HCT116 (cell line): ENCODE measurements at regions of chr12 and their contacts with region 1.

Region 1: DNA sequence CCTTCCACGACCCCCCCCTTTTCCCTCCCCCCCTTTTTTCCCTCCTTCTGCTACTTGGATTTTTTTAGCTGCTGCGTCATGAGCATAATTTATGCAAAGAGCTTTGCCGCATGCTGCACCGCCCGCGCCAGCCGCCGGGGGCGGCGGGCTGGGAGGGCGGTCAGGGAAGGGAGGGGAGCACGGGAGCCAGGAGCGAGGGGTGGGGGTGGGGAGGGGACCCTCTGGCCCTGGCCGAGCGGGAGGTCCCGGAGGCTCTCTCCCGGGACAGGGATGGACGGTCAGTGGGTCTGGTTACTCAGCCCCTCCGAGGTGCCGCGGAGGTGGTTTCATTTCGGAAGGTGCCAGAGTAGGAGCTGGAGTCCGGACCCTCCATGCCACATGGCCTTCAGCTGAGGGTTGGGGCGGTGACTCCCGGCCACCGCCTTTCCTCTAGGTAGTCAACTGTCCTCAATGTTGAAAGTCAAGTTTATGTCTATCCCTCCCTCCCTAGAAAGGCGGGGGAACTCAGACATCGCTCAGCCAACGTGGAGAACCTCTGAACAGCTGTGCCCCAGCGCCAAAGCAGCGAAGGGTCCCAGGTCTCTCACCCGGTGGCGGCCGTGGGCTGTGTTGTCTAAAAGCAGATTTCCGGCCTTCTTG is at the start of gene POU6F1:
- DNase-seq: peak; percentile 51
- ATAC-seq: peak; percentile 88
- H3K4me3 ChIP-seq: peak within 1 kb of the TSS; percentile 62 to 64
- H3K27ac ChIP-seq: peak within 1 kb of the TSS; percentile 54
- H3K4me1 ChIP-seq: peaks cover 6 to 21% of the 10 kb centered on the region in 2 experiments; a peak in 3 of 4 replicates
- H3K27me3 ChIP-seq: no peaks in the 10 kb centered on the region
- CTCF ChIP-seq: peak in 2 of 3 experiments; percentile 48 to 54; a peak in 4 of 6 replicates
- POLR2A ChIP-seq: peak; percentile 29
- RAD21 ChIP-seq: no peak
- total RNA-seq, gene POU6F1: 6.4 TPM

Region 2: GRCh38 chr12:51083126-51083833 is 134.8 kb before region 1 on chr12 and contains the start of gene CSRNP2:
- CTCF ChIA-PET with region 1: no interaction called
- POLR2A ChIA-PET with region 1: interaction called, 5 read pairs
- RAD21 ChIA-PET with region 1: no interaction called
- intact Hi-C with region 1: loop called (anchors 10 kb)
- DNase-seq: peak; percentile 83
- ATAC-seq: peak; percentile 100
- H3K4me3 ChIP-seq: peak within 1 kb of the TSS; percentile 85 to 96
- H3K27ac ChIP-seq: peak within 1 kb of the TSS; percentile 63
- H3K4me1 ChIP-seq: peaks cover 5 to 13% of the 10 kb centered on the region in 2 experiments; a peak in 3 of 4 replicates
- H3K27me3 ChIP-seq: no peaks in the 10 kb centered on the region
- CTCF ChIP-seq: no peak
- POLR2A ChIP-seq: peak; percentile 99
- RAD21 ChIP-seq: peak; percentile 19; the same call in 1 of the 2 replicates
- total RNA-seq, gene CSRNP2: 19.0 TPM

Region 3: GRCh38 chr12:51172515-51173431 is 45.3 kb before region 1 on chr12 and contains the start of gene TFCP2:
- CTCF ChIA-PET with region 1: no interaction called
- POLR2A ChIA-PET with region 1: interaction called, 7 read pairs
- RAD21 ChIA-PET with region 1: no interaction called
- intact Hi-C with region 1: loop called (anchors 2 kb)
- DNase-seq: peak; percentile 97
- ATAC-seq: peak; percentile 93
- H3K4me3 ChIP-seq: peak within 1 kb of the TSS; percentile 79 to 98
- H3K27ac ChIP-seq: peak within 1 kb of the TSS; percentile 92
- H3K4me1 ChIP-seq: peaks cover 4 to 20% of the 10 kb centered on the region in 2 experiments; a peak in 3 of 4 replicates
- H3K27me3 ChIP-seq: no peaks in the 10 kb centered on the region
- CTCF ChIP-seq: no peak
- POLR2A ChIP-seq: peak; percentile 95
- RAD21 ChIP-seq: no peak
- total RNA-seq, gene TFCP2: 31.6 TPM

Region 4: DNA sequence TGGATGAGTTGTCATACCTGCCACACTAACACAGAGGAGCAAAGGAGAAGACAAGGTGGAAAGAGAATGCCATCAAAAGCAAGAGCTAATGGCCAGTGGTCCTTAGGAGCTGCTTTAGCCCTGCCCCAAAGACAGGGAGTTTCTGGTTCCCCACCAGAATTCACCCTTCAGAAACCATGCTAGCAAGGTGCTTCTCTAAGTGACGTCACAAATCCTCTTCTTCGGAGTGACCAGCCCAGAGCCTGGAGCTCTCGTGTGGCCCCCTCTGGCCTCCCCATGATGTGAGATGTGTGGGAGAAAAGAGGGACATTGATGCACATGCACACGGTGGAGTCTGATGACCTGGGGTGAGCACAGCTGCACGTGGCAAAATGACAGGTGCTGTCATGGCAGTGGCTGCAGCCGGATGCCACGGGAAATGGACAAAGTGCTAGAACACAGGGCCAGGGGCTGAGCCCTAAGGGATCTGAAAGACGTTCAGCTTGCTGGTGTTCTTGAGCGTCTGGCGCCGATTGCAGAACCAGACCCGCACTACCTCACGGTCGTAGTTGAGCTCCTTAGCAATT is 28.2 kb before region 1 on chr12:
- CTCF ChIA-PET with region 1: no interaction called
- POLR2A ChIA-PET with region 1: no interaction called
- RAD21 ChIA-PET with region 1: no interaction called
- intact Hi-C with region 1: no loop called
- DNase-seq: no peak
- ATAC-seq: no peak
- H3K4me3 ChIP-seq: no peak overlapping the region
- H3K27ac ChIP-seq: no peak overlapping the region
- H3K4me1 ChIP-seq: peaks cover 0 to 5% of the 10 kb centered on the region in 2 experiments; a peak in 3 of 4 replicates
- H3K27me3 ChIP-seq: no peaks in the 10 kb centered on the region
- CTCF ChIP-seq: no peak
- POLR2A ChIP-seq: no peak
- RAD21 ChIP-seq: no peak

Region 5: DNA sequence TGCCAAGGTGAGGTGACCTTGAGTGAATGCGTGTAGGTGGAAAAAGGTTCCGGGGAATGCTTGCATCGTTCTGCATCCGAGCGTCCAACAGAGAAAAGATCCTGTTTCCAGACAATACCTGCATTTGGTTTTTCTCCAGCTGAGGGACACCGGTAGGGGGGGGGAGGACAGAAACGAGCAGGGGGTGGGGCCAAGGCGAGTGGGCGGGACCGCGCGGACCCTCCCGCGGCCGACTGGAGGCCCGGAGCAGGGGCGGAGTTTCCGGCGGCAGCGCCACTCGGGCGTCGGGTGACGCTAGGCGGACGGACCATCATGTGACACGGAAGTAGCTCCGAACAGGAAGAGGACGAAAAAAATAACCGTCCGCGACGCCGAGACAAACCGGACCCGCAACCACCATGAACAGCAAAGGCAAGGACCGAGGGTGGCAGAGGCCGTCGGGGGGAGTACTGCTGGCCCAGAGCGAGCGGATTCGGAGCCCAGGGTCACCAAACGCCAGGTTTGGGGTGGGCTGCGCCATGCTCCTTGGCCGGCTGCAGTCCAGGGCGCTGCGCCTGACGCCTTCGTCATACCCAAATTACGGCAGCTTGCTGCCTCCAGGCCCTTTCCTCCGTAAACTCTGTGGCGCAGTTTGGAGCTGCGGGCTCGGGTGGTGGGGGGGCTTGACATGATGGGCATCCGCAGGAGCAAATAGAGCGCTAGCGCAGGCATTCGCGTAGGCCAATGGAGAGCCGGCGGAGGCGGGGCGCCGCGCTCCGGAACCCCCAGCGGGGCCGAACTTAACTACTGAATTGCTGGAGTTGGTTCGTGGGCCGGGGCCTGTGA is 20.6 kb after region 1 on chr12 and contains the start of gene DAZAP2:
- CTCF ChIA-PET with region 1: interaction called, 10 read pairs
- POLR2A ChIA-PET with region 1: interaction called, 14 read pairs
- RAD21 ChIA-PET with region 1: interaction called, 4 to 6 read pairs
- intact Hi-C with region 1: no loop called
- DNase-seq: peak; percentile 90
- ATAC-seq: peak; percentile 94
- H3K4me3 ChIP-seq: peak within 1 kb of the TSS; percentile 96 to 99
- H3K27ac ChIP-seq: peak within 1 kb of the TSS; percentile 98
- H3K4me1 ChIP-seq: peaks cover 12 to 15% of the 10 kb centered on the region in 2 experiments
- H3K27me3 ChIP-seq: no peaks in the 10 kb centered on the region
- CTCF ChIP-seq: peak in 2 of 3 experiments; percentile 16 to 43; a peak in 2 of 6 replicates
- POLR2A ChIP-seq: peak; percentile 51
- RAD21 ChIP-seq: no peak
- total RNA-seq, gene DAZAP2: 157 TPM